Tibial artery (tissue), 4 donors: ENCODE measurements at regions of chr15 and their contacts with region 1.

Region 1: GRCh38 chr15:99704444-99704838 is 28.8 kb downstream of the LYSMD4 start:
- DNase-seq: no peak
- H3K4me3 ChIP-seq: no peak overlapping the region
- H3K27ac ChIP-seq: peak overlapping the region; percentile 73 to 77
- H3K4me1 ChIP-seq: peaks cover 0 to 49% (median 24%) of the 10 kb centered on the region in 4 donors
- H3K27me3 ChIP-seq: no peaks in the 10 kb centered on the region
- CTCF ChIP-seq: peak; percentile 74 to 78

Region 2: GRCh38 chr15:99282121-99282520 is 422.3 kb before region 1 on chr15:
- intact Hi-C with region 1: loop called (anchors 5 kb)
- DNase-seq: no peak
- H3K4me3 ChIP-seq: no peak overlapping the region
- H3K27ac ChIP-seq: no peak overlapping the region
- H3K4me1 ChIP-seq: peaks cover 0 to 11% (median 5%) of the 10 kb centered on the region in 4 donors
- H3K27me3 ChIP-seq: no peaks in the 10 kb centered on the region
- CTCF ChIP-seq: no peak

Region 3: DNA sequence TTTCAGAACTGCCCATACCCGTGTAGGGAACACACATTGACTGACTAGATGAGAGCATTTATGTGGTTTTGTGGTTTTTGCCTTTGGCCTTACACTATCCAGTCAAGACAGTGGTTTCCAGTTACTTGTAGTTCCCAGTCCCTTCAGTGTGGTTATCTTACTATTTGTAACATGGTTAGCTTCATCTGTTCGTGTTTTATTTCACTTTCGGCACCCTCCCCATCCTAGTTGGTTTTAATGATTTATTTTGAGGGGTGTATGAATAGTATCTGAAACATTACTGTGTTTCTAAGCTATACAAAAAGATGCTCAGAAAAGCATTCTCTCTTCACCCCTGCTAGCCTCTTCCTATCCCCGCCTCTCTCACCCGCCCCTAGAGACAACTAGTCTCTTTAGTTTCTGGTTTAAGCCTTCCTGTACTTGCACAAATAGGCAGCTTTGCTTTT is 14.7 kb after region 1 on chr15:
- intact Hi-C with region 1: no loop called
- DNase-seq: no peak
- H3K4me3 ChIP-seq: no peak overlapping the region
- H3K27ac ChIP-seq: no peak overlapping the region
- H3K4me1 ChIP-seq: peaks cover 0 to 26% (median 18%) of the 10 kb centered on the region in 4 donors
- H3K27me3 ChIP-seq: no peaks in the 10 kb centered on the region
- CTCF ChIP-seq: no peak

Region 4: GRCh38 chr15:99749386-99749785 is 44.9 kb after region 1 on chr15:
- intact Hi-C with region 1: no loop called
- DNase-seq: no peak
- H3K4me3 ChIP-seq: no peak overlapping the region
- H3K27ac ChIP-seq: no peak overlapping the region
- H3K4me1 ChIP-seq: no peaks in the 10 kb centered on the region
- H3K27me3 ChIP-seq: no peaks in the 10 kb centered on the region
- CTCF ChIP-seq: no peak

Region 5: DNA sequence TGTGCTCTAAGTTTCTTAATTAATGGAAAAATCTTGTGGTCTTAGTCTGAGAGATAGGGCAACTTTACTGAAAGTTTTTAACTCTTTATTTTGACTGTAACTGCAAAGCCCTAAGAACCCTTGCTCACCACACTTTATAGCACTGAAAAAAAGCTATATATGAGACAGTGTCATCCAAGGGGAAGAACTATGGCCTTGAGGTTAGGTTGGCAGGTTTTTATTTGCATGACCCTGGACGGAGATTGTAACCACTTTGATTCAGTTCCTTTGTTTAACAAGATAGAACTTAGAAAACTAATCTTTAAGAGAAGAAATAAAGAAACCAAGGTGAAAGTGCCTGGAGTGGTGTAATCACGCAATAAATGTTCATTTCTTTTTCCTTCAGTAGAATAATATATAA is 59.4 kb after region 1 on chr15:
- intact Hi-C with region 1: no loop called
- DNase-seq: no peak
- H3K4me3 ChIP-seq: no peak overlapping the region
- H3K27ac ChIP-seq: no peak overlapping the region
- H3K4me1 ChIP-seq: no peaks in the 10 kb centered on the region
- H3K27me3 ChIP-seq: no peaks in the 10 kb centered on the region
- CTCF ChIP-seq: no peak